H1 (cell line): ENCODE measurements at regions of chr13 and their contacts with region 1.

Region 1: GRCh38 chr13:76016799-76017400 is 380.8 kb downstream of the LMO7 start:
- DNase-seq: peak in 1 of 2 experiments; percentile 73
- H3K4me3 ChIP-seq: no peak overlapping the region
- H3K27ac ChIP-seq: no peak overlapping the region
- H3K4me1 ChIP-seq: no peaks in the 10 kb centered on the region
- H3K27me3 ChIP-seq: no peaks in the 10 kb centered on the region
- CTCF ChIP-seq: peak; percentile 5 to 75 (median 52); a peak in 3 of 4 replicates
- EP300 ChIP-seq: no peak
- POLR2A ChIP-seq: no peak
- RAD21 ChIP-seq: peak; percentile 61

Region 2: GRCh38 chr13:75788481-75788981 is 228.4 kb before region 1 on chr13:
- CTCF ChIA-PET with region 1: no interaction called
- POLR2A ChIA-PET with region 1: no interaction called
- DNase-seq: no peak
- H3K4me3 ChIP-seq: no peak overlapping the region
- H3K27ac ChIP-seq: no peak overlapping the region
- H3K4me1 ChIP-seq: peaks cover 0 to 3% (median 0%) of the 10 kb centered on the region in 4 experiments; a peak in 2 of 7 replicates
- H3K27me3 ChIP-seq: no peaks in the 10 kb centered on the region
- CTCF ChIP-seq: no peak
- EP300 ChIP-seq: no peak
- POLR2A ChIP-seq: no peak
- RAD21 ChIP-seq: no peak

Region 3: GRCh38 chr13:75931116-75931515 is 85.8 kb before region 1 on chr13:
- CTCF ChIA-PET with region 1: interaction called, 14 read pairs
- POLR2A ChIA-PET with region 1: no interaction called
- DNase-seq: no peak
- H3K4me3 ChIP-seq: no peak overlapping the region
- H3K27ac ChIP-seq: no peak overlapping the region
- H3K4me1 ChIP-seq: no peaks in the 10 kb centered on the region
- H3K27me3 ChIP-seq: no peaks in the 10 kb centered on the region
- CTCF ChIP-seq: no peak
- EP300 ChIP-seq: no peak
- POLR2A ChIP-seq: no peak
- RAD21 ChIP-seq: no peak

Region 4: DNA sequence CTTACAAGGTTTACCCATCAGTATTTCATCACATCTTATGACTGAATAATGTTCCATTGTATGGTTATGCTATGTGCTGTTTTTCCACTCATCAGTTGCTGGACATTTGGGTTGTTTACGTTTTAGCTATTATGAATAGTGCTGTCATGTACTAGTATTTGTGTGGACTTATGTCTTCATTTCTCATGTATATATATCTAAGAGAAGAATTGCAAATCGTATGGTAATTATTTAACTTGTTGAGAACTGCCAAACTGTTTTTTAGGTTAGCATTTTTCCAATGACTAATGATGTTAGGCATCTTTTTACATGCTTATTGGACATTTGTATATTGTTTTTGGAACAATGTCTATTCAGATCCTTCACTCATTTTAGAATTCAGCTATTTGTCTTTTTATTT is 12.5 kb before region 1 on chr13:
- CTCF ChIA-PET with region 1: interaction called, 46 read pairs
- POLR2A ChIA-PET with region 1: no interaction called
- DNase-seq: no peak
- H3K4me3 ChIP-seq: no peak overlapping the region
- H3K27ac ChIP-seq: no peak overlapping the region
- H3K4me1 ChIP-seq: no peaks in the 10 kb centered on the region
- H3K27me3 ChIP-seq: no peaks in the 10 kb centered on the region
- CTCF ChIP-seq: no peak
- EP300 ChIP-seq: no peak
- POLR2A ChIP-seq: no peak
- RAD21 ChIP-seq: no peak

Region 5: DNA sequence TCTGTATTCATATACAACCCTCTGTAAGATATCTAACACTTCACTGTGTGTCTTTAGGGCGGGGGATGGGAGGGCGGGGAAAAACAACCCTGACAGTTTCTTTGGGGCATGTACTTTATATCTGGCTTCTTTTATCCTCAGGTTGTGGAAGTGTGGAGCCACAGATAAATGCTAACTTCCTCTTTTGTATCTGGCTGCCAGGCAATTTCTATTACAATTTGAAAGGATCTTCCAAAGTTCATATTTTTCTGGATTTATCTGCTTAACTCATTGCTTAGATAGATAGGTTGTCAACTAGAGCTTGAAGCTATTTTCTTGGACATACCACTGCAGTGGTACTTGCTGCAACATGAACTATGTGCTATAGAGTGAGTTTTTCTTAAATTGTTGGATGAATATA is 12.2 kb after region 1 on chr13:
- CTCF ChIA-PET with region 1: interaction called, 11 read pairs
- POLR2A ChIA-PET with region 1: no interaction called
- DNase-seq: no peak
- H3K4me3 ChIP-seq: no peak overlapping the region
- H3K27ac ChIP-seq: no peak overlapping the region
- H3K4me1 ChIP-seq: no peaks in the 10 kb centered on the region
- H3K27me3 ChIP-seq: no peaks in the 10 kb centered on the region
- CTCF ChIP-seq: no peak
- EP300 ChIP-seq: no peak
- POLR2A ChIP-seq: no peak
- RAD21 ChIP-seq: no peak

Region 6: DNA sequence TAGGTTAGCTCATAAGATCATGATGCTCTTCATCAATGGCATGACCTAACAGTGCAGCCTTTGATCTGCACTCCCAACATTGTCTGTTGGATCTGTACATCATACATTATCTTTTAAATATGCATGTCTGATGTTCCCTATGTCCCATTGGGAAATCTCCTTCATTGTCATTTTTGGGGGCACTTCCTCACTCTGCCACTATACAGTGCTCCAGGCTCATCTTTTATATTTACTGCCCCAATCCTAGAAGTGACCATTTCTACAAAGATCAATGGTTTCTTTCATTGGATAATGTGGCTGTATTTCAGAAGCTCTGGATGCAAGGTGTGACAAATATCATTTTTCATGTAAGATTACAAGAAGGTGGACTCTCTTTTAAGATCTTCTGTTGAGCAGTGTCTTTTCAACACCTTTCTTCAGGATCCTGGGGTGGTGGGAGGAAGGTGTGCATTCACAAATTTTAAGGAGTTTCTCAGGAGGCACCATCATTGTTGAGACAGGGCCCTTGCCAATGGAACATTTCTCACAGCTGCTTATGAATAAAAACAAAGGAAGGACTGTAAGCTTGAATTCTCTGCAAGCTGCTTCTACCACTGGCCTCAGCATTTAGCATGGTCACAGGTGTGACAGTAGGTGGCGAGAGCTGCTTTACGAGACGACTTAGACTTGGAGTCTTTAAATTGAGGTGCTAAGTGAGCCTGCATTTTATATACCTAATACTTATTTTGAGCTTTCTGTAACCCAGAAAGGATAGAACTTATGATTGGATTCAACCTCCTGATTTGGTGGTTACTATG is 22.2 kb after region 1 on chr13:
- CTCF ChIA-PET with region 1: interaction called, 28 read pairs
- POLR2A ChIA-PET with region 1: no interaction called
- DNase-seq: no peak
- H3K4me3 ChIP-seq: no peak overlapping the region
- H3K27ac ChIP-seq: no peak overlapping the region
- H3K4me1 ChIP-seq: no peaks in the 10 kb centered on the region
- H3K27me3 ChIP-seq: no peaks in the 10 kb centered on the region
- CTCF ChIP-seq: peak; percentile 38 to 64 (median 63)
- EP300 ChIP-seq: no peak
- POLR2A ChIP-seq: no peak
- RAD21 ChIP-seq: peak; percentile 71 to 80